IMR-90 (cell line): ENCODE measurements at regions of chr3 and their contacts with region 1.

Region 1: DNA sequence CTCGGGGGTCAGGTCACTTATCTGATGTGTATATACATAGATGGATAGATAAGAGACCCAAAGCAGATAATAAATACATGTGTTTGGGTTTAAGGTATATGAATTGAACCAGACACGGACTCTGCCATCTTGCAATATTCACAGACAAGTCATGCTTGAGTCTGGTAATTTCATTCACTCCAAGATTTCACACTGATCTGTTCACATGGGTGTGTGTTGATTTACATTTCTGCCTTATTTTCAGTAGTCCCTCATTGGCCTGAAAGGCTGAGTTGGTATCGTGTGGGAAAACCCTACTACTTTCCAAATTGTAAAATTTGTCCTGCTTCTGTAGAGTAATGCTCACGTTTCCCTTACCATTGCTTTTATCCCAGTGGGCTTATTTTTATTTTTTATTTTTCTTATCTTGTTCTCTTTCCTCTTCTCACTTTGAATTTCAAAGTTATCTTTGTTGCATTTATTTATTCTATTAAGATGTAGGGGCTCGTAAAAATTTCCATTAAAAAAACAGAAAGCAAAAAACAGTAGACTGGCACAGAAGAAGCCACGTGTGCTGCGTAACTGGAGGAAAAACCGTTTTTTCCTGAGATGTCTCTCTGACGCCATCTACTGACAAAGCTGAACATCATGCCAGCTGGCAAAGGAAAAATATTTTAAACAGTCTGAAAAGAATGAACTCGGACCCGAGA is 10.8 kb upstream of the MFSD1 start:
- DNase-seq: peak; percentile 86
- ATAC-seq: peak; percentile 36; the same call in 1 of the 2 replicates
- H3K4me3 ChIP-seq: no peak overlapping the region
- H3K27ac ChIP-seq: no peak overlapping the region
- H3K4me1 ChIP-seq: peaks cover 6% of the 10 kb centered on the region
- H3K27me3 ChIP-seq: no peaks in the 10 kb centered on the region
- CTCF ChIP-seq: peak; percentile 95
- POLR2A ChIP-seq: no peak
- RAD21 ChIP-seq: peak; percentile 89

Region 2: GRCh38 chr3:158539414-158540014 is 251.5 kb before region 1 on chr3:
- CTCF ChIA-PET with region 1: no interaction called
- POLR2A ChIA-PET with region 1: no interaction called
- dilution Hi-C with region 1: no loop called
- in situ Hi-C with region 1: loop called (anchors 5 kb)
- intact Hi-C with region 1: loop called (anchors 1 kb)
- DNase-seq: peak; percentile 58
- ATAC-seq: peak; percentile 75
- H3K4me3 ChIP-seq: no peak overlapping the region
- H3K27ac ChIP-seq: no peak overlapping the region
- H3K4me1 ChIP-seq: no peaks in the 10 kb centered on the region
- H3K27me3 ChIP-seq: no peaks in the 10 kb centered on the region
- CTCF ChIP-seq: peak; percentile 63
- POLR2A ChIP-seq: no peak
- RAD21 ChIP-seq: peak; percentile 50

Region 3: GRCh38 chr3:158672293-158673176 is 118.5 kb before region 1 on chr3 and contains the start of gene LXN:
- CTCF ChIA-PET with region 1: interaction called, 12 read pairs
- POLR2A ChIA-PET with region 1: no interaction called
- dilution Hi-C with region 1: no loop called
- in situ Hi-C with region 1: no loop called
- intact Hi-C with region 1: loop called (anchors 2 kb)
- DNase-seq: peak; percentile 87
- ATAC-seq: peak; percentile 99
- H3K4me3 ChIP-seq: peak within 1 kb of the TSS; percentile 59
- H3K27ac ChIP-seq: peak within 1 kb of the TSS; percentile 83
- H3K4me1 ChIP-seq: peaks cover under 1% of the 10 kb centered on the region; the same call in 1 of the 2 replicates
- H3K27me3 ChIP-seq: no peaks in the 10 kb centered on the region
- CTCF ChIP-seq: peak; percentile 95
- POLR2A ChIP-seq: peak; percentile 69; the same call in 1 of the 2 replicates
- RAD21 ChIP-seq: peak; percentile 65
- total RNA-seq, gene LXN: 83.0 and 93.6 TPM in 2 replicates